Kidney (tissue), 22 donors: ENCODE measurements at regions of chr15 and their contacts with region 1.

Region 1: GRCh38 chr15:92714477-92715401 is 59.2 kb upstream of the FAM174B start:
- DNase-seq: peak; percentile 87 to 95 (median 92)
- H3K4me3 ChIP-seq: peak overlapping the region; percentile 66 to 73 (median 69)
- H3K27ac ChIP-seq: peak overlapping the region; percentile 55 to 80
- H3K4me1 ChIP-seq: peaks cover 0 to 3% (median 2%) of the 10 kb centered on the region in 3 donors
- H3K27me3 ChIP-seq: no peaks in the 10 kb centered on the region
- CTCF ChIP-seq: peak; percentile 89

Region 2: GRCh38 chr15:92521624-92522008 is 193.1 kb before region 1 on chr15:
- intact Hi-C with region 1: loop called (anchors 10 kb)
- DNase-seq: peak in 4 of 5 donors; percentile 80 to 93 (median 89)
- H3K4me3 ChIP-seq: no peak overlapping the region
- H3K27ac ChIP-seq: no peak overlapping the region
- H3K4me1 ChIP-seq: no peaks in the 10 kb centered on the region
- H3K27me3 ChIP-seq: no peaks in the 10 kb centered on the region
- CTCF ChIP-seq: peak; percentile 74